Sigmoid colon (tissue), 7 donors: ENCODE measurements at regions of chr16 and their contacts with region 1.

Region 1: DNA sequence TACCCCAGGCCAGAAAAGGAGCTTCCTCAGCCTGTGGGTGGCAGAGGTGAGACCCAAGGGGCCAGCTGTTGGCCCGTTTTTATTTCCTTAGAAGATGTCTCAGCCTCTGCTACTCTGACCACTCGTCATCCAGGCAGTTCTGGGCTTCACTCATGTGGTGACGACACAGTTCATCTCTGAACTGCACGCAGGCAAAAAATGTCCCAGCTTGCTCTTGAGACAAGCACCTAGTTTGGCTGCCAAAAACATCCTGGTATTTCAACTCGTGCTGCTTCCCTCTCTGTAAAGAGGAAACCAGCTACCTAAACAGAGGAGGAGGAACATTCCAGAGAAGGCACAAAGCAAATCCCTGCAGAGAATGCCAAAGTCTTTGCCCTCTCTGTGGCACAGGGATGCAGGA is 125.7 kb downstream of the XYLT1 start:
- DNase-seq: peak; percentile 96
- H3K4me3 ChIP-seq: no peak overlapping the region
- H3K27ac ChIP-seq: peak overlapping the region; percentile 82 to 92 (median 88)
- H3K4me1 ChIP-seq: peaks cover 0 to 78% (median 75%) of the 10 kb centered on the region in 4 donors
- H3K27me3 ChIP-seq: no peaks in the 10 kb centered on the region
- CTCF ChIP-seq: no peak
- EP300 ChIP-seq: peak; percentile 82 to 99 (median 88)
- POLR2A ChIP-seq: no peak

Region 2: DNA sequence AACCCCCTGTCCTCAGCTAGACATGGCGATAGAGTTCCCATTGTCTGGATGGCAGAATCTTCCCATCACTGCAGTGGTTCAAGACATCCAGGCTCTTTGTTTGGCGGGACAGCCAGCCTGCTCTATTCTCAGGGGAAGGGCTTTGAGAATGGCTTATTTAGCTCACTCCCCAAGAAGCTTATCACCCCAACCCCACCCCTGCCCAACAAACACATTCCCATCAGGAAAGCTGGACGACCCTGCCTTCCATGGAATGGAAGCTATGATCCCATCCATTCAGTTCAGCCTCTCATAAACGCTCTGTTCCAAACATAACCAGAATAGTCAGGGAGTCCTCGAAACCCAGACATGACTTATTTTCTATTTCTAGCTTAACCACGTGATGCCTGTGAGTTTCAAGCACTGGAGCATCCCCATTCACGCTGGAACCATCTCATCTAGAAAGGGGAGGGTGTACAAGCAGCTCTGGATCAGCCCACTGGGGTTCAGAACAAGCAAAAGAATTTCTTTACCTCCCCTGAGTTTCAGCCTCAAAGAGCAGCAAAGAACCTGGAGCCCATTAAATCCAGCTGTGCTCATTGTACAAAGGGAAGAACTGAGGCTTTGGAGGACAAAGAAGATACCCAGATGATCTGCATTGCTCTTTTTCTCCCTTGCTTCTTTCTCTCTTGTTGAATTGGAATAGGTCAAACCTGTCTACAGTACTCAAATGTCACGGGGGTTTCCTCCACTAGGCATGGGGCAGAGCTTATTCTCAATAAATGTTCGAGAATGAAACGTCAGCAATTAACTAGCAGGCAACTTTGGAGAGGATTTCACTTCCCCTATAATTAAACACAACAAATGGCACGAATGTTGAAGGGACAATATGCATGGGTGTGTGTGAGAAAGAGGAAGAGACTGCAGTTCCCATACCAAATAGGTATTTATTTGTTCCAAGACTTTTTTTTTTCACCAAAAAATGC is 32.6 kb after region 1 on chr16:
- intact Hi-C with region 1: loop called (anchors 5 kb)
- DNase-seq: no peak
- H3K4me3 ChIP-seq: no peak overlapping the region
- H3K27ac ChIP-seq: peak overlapping the region; percentile 86 to 97 (median 88)
- H3K4me1 ChIP-seq: peaks cover 0 to 73% (median 68%) of the 10 kb centered on the region in 4 donors
- H3K27me3 ChIP-seq: no peaks in the 10 kb centered on the region
- CTCF ChIP-seq: no peak
- EP300 ChIP-seq: peak in 1 of 4 donors; percentile 49
- POLR2A ChIP-seq: no peak

Region 3: DNA sequence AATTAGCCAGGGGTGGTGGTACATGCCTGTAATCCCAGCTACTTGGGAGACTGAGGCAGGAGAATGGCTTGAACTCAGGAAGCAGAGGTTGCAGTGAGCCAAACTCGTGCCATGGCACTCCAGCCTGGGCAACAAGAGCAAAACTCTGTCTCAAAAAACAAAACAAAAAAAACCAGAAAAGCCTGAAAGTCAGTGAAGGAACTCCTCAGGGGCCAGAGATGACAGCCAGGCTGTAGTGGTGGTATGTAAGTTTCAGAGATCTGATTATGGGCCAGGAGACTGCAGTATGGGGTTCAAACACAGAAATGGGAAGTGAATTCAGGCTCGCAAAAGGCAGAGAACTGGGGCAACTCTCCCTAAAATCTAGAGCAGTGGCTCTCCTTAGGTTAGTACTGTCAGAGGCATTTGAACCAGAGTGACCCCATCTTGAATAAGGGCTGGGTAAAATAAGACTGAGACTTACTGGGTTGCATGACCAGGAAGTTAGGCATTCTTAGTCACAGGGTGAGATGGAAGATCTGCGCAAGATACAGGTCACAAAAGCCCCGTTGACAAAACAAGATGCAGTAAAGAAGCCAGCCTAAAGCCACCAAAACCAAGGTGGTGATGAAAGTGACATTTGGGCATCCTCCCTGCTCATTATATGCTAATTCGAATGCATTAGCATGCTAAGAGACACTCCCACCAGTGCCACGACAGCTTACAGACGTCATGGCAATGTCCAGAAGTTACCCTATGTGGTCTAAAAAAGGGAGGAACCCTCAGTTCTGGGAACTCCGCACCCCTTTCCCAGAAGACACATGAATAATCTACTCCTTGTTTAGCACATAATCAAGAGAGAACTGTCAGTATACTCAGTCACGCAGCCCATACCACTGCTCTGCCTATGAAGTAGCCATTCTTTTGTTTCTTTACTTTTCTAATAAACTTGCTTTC is 245.9 kb after region 1 on chr16:
- intact Hi-C with region 1: no loop called
- DNase-seq: no peak
- H3K4me3 ChIP-seq: no peak overlapping the region
- H3K27ac ChIP-seq: no peak overlapping the region
- H3K4me1 ChIP-seq: no peaks in the 10 kb centered on the region
- H3K27me3 ChIP-seq: no peaks in the 10 kb centered on the region
- CTCF ChIP-seq: no peak
- EP300 ChIP-seq: no peak
- POLR2A ChIP-seq: no peak